ENCODE measurements at regions of chr14 and their contacts with region 1.

Region 1: GRCh38 chr14:20682435-20683124 is 1.8 kb upstream of the RNASE4 start:
- DNase-seq: peak; percentile 95
- H3K4me3 ChIP-seq: peak overlapping the region; percentile 40 to 84 (median 80)
- H3K27ac ChIP-seq: peak overlapping the region; percentile 97
- H3K4me1 ChIP-seq: peaks cover 27% of the 10 kb centered on the region
- H3K27me3 ChIP-seq: no peaks in the 10 kb centered on the region
- CTCF ChIP-seq: no peak
- POLR2A ChIP-seq: peak; percentile 89

Region 2: GRCh38 chr14:20332788-20333493 is 349.6 kb before region 1 on chr14 and contains the start of gene CCNB1IP1:
- CTCF ChIA-PET with region 1: interaction called, 3 read pairs
- POLR2A ChIA-PET with region 1: no interaction called
- dilution Hi-C with region 1: no loop called
- intact Hi-C with region 1: loop called (anchors 2 kb)
- DNase-seq: peak; percentile 87
- H3K4me3 ChIP-seq: peak within 1 kb of the TSS; percentile 48 to 93 (median 65)
- H3K27ac ChIP-seq: peak within 1 kb of the TSS; percentile 71
- H3K4me1 ChIP-seq: peaks cover 19% of the 10 kb centered on the region
- H3K27me3 ChIP-seq: no peaks in the 10 kb centered on the region
- CTCF ChIP-seq: no peak
- POLR2A ChIP-seq: peak; percentile 69
- total RNA-seq, gene CCNB1IP1: 35.5 and 38.9 TPM in 2 replicates

Region 3: GRCh38 chr14:20461274-20462001 is 221.1 kb before region 1 on chr14 and contains the start of gene PIP4P1:
- CTCF ChIA-PET with region 1: no interaction called
- POLR2A ChIA-PET with region 1: no interaction called
- dilution Hi-C with region 1: no loop called
- intact Hi-C with region 1: loop called (anchors 1 kb)
- DNase-seq: peak; percentile 100
- H3K4me3 ChIP-seq: peak within 1 kb of the TSS; percentile 43 to 78 (median 66)
- H3K27ac ChIP-seq: peak within 1 kb of the TSS; percentile 35
- H3K4me1 ChIP-seq: peaks cover 18% of the 10 kb centered on the region
- H3K27me3 ChIP-seq: peaks cover 2 to 8% of the 10 kb centered on the region in 2 experiments
- CTCF ChIP-seq: no peak
- POLR2A ChIP-seq: no peak
- total RNA-seq, gene PIP4P1: 28.6 and 33.6 TPM in 2 replicates

Region 4: DNA sequence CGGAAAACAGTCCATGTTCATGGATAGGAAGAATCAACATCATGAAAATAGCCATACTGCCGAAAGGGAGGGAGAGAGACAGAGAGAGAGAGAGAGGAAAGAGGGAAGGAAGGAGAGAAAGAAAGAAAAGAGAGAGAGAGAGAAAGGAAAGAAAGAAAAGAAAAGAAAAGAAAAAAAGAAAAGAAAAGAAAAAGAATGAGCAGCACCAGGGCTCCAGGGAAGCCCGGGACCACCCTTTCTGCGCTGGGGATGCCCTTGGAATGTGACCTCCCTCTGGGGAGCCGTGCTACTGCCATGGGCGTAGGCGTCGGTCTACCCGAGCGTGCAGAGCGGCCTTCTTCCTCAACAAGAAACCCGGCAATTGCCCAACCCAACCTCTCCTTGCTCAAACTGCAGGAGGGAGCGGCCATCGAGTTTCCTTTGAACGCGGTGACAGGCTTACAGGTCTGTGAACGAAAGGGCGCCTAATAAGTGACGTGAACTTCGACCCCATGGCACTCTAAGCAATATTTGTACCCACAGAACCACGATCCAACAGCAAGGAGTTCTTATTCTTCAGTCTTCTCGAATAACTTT is 58.0 kb before region 1 on chr14:
- CTCF ChIA-PET with region 1: no interaction called
- POLR2A ChIA-PET with region 1: no interaction called
- dilution Hi-C with region 1: no loop called
- intact Hi-C with region 1: loop called (anchors 1 kb)
- DNase-seq: no peak
- H3K4me3 ChIP-seq: peak overlapping the region; percentile 15 to 87 (median 64)
- H3K27ac ChIP-seq: no peak overlapping the region
- H3K4me1 ChIP-seq: peaks cover 14% of the 10 kb centered on the region
- H3K27me3 ChIP-seq: peaks cover 24 to 32% of the 10 kb centered on the region in 2 experiments
- CTCF ChIP-seq: no peak
- POLR2A ChIP-seq: no peak

Region 5: GRCh38 chr14:20632682-20633428 is 49.7 kb before region 1 on chr14:
- CTCF ChIA-PET with region 1: interaction called, 17 read pairs
- POLR2A ChIA-PET with region 1: no interaction called
- dilution Hi-C with region 1: no loop called
- intact Hi-C with region 1: loop called (anchors 1 kb)
- DNase-seq: peak; percentile 61
- H3K4me3 ChIP-seq: peak overlapping the region in 2 of 3 experiments; percentile 17 to 49
- H3K27ac ChIP-seq: no peak overlapping the region
- H3K4me1 ChIP-seq: peaks cover 24% of the 10 kb centered on the region
- H3K27me3 ChIP-seq: peaks cover 19 to 36% of the 10 kb centered on the region in 2 experiments
- CTCF ChIP-seq: no peak
- POLR2A ChIP-seq: no peak

Region 6: DNA sequence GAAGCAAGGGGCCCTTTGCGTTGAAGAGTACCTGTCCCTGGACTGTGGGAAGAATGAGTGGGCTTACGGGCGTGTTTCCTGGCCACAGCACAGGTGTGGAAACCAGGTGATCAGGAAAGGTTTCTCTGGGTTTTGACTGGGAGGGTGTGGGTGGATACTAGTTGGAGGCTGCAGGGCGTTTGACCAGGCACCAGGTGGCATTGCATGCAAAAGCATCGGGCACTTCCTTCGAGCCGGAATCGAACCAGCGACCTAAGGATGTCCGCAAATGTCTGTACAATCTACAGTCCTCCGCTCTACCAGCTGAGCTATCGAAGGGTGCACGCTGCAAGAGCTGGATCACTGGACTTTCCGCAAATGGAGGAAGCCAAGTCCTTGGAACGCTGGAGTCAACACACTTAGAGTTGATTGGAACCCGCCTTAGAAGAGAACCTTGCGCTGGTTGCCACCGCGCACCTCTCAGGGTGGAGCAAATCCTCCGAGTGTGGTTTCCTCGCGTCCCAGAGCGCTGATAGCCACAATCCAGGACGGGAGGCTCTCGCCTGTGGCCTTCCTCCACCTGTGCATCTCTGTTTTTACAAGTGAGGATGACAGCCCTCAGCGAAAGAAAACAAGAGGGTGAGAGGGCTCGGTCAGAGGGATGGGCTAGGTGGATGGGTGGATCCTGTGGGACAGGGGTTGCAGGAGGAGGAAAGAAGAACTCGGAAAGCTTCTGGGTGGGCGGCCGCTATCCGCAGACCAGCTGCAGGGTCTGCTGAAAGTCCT is 19.4 kb before region 1 on chr14:
- CTCF ChIA-PET with region 1: interaction called, 24 read pairs
- POLR2A ChIA-PET with region 1: interaction called, 3 read pairs
- dilution Hi-C with region 1: no loop called
- intact Hi-C with region 1: loop called (anchors 1 kb)
- DNase-seq: peak; percentile 49
- H3K4me3 ChIP-seq: peak overlapping the region in 2 of 3 experiments; percentile 24 to 34
- H3K27ac ChIP-seq: no peak overlapping the region
- H3K4me1 ChIP-seq: no peaks in the 10 kb centered on the region
- H3K27me3 ChIP-seq: peaks cover 4 to 17% of the 10 kb centered on the region in 2 experiments
- CTCF ChIP-seq: peak; percentile 40 to 53
- POLR2A ChIP-seq: no peak

Region 7: DNA sequence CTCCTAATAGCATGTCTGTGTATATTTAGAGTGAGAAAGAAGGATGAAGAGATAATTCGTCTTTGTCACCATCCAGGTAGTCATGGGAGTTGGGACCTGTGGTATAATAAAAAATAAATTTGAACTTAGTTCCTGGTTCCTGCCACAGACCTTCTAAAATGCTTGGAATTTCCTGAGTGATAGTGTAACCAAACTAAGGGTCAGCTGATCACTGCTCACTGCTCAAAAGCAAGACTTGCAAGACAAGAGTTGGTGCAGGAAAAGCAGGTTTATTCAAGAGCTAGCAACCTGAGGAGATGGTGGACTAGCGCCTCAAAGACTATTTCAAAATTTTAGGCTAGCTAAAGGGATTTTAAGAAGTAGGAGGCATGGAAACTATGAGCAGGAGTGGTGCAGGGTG is 25.0 kb after region 1 on chr14:
- CTCF ChIA-PET with region 1: interaction called, 4 read pairs
- POLR2A ChIA-PET with region 1: no interaction called
- dilution Hi-C with region 1: no loop called
- intact Hi-C with region 1: loop called (anchors 1 kb)
- DNase-seq: peak; percentile 57
- H3K4me3 ChIP-seq: peak overlapping the region in 1 of 3 experiments; percentile 31
- H3K27ac ChIP-seq: peak overlapping the region; percentile 82
- H3K4me1 ChIP-seq: peaks cover 14% of the 10 kb centered on the region
- H3K27me3 ChIP-seq: no peaks in the 10 kb centered on the region
- CTCF ChIP-seq: no peak
- POLR2A ChIP-seq: no peak

Measured in endothelial cell of umbilical vein (primary cell).